Calu3 (cell line): ENCODE measurements at regions of chr5 and their contacts with region 1.

Region 1: DNA sequence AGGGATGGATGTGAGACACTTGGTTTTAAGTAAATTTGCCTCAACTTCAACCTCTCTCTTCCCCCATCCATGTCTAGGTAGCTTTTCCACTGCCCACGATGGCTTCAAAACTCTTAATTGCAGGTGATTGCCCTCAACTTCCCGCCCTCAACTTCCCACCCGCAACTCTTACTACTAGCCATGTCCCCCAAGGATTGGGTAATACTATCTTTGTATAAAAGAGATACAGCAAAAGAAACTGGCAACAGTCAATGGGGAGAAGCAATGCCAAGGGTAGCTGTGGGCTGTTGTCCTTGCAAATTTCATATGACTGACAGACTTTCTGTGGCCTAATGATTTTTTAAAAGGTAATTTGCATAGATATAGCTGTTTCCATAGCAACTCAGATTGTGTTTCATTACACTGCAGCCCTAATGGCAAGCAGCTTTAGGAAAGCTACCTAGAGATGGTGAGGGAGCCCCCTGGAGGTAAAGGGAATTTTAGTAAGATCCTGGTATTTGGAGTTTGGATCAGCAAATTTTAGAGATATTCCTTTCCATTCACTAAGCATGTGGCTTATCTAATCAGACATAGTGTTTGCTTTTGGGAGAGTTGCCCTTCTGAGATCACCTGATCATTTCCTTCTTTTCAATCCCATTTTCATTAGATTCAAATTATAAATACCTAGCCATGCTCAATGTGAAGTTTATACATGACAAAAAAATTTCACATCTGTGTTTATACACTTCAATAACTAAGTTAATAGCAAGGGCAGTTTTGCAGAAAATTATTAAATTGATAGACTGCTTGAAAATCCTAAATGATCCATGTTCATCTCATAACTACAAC is 421.6 kb upstream of the DAP start:
- DNase-seq: peak; percentile 56
- H3K4me3 Mint-ChIP-seq: no peak overlapping the region
- H3K27ac Mint-ChIP-seq: no peak overlapping the region
- H3K4me1 Mint-ChIP-seq: no peaks in the 10 kb centered on the region
- H3K27me3 Mint-ChIP-seq: no peaks in the 10 kb centered on the region
- CTCF ChIP-seq: peak; percentile 32

Region 2: GRCh38 chr5:10536931-10537579 is 645.6 kb before region 1 on chr5:
- CTCF ChIA-PET with region 1: no interaction called
- intact Hi-C with region 1: no loop called
- DNase-seq: no peak
- H3K4me3 Mint-ChIP-seq: peak overlapping the region; percentile 42
- H3K27ac Mint-ChIP-seq: no peak overlapping the region
- H3K4me1 Mint-ChIP-seq: peaks cover 11% of the 10 kb centered on the region
- H3K27me3 Mint-ChIP-seq: peaks cover 35% of the 10 kb centered on the region
- CTCF ChIP-seq: no peak

Region 3: DNA sequence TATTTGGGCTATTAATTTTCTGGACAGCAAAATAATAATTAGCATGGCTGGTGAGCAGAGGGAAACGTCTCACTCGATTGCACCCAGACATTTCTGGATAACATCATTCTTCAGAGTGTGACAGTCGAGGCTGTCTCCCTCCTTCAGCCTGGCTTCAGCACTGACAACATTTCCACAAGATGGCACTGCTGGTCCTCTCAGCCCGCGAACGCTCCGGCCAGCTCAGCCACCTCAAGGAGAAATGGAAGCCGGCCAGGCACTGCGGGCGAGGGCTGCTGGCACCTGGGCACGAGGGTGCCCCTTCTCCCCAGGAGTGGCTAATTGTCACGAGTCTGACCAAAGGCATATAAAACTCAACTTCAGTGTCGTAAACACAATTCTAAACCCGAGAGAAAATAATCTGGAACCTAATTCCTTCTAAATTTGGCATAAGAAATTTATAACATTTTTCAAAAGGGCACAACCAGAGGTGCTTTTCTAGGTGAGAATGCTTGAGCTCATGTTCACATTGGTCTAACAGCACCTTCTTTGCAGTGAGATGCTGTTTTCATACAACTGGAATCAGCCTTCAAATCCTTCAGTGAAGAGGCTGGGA is 487.5 kb before region 1 on chr5:
- CTCF ChIA-PET with region 1: no interaction called
- intact Hi-C with region 1: loop called (anchors 10 kb)
- DNase-seq: peak; percentile 78
- H3K4me3 Mint-ChIP-seq: no peak overlapping the region
- H3K27ac Mint-ChIP-seq: no peak overlapping the region
- H3K4me1 Mint-ChIP-seq: peaks cover 34% of the 10 kb centered on the region
- H3K27me3 Mint-ChIP-seq: no peaks in the 10 kb centered on the region
- CTCF ChIP-seq: peak; percentile 52

Region 4: DNA sequence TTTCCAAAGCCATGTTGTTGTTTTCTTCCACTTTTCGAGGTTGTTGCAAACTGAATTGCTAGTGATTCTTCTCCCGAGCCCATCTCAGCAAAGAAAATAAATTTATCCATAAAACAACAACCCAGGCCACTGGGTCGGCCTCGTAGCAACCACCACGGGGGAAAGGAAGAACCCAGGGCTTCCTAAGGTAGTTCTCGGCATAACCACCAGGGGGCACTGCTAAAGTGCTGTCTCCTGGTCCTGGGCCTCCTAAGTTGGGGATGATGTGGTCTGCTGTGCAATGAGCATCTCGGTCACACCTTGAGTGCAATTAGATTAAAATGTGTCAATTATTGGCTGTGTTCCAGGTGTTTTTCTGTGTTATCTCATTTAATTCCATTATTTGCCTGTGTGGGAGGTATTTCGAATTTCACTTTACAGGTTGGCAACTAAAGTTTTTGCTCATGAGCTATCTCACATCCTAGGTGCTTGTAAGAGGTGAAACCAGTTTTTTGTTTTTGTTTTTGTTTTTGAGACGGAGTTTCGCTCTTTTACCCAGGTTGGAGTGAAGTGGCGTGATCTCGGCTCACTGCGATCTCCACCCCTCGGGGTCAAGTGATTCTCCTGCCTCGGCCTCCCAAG is 318.8 kb before region 1 on chr5:
- CTCF ChIA-PET with region 1: no interaction called
- intact Hi-C with region 1: loop called (anchors 2 kb)
- DNase-seq: peak; percentile 76
- H3K4me3 Mint-ChIP-seq: no peak overlapping the region
- H3K27ac Mint-ChIP-seq: no peak overlapping the region
- H3K4me1 Mint-ChIP-seq: no peaks in the 10 kb centered on the region
- H3K27me3 Mint-ChIP-seq: peaks cover 72% of the 10 kb centered on the region
- CTCF ChIP-seq: peak; percentile 85

Region 5: GRCh38 chr5:10987930-10988504 is 194.6 kb before region 1 on chr5:
- CTCF ChIA-PET with region 1: interaction called, 9 read pairs
- intact Hi-C with region 1: loop called (anchors 1 kb)
- DNase-seq: peak; percentile 93
- H3K4me3 Mint-ChIP-seq: peak overlapping the region; percentile 32
- H3K27ac Mint-ChIP-seq: no peak overlapping the region
- H3K4me1 Mint-ChIP-seq: peaks cover 13% of the 10 kb centered on the region
- H3K27me3 Mint-ChIP-seq: no peaks in the 10 kb centered on the region
- CTCF ChIP-seq: peak; percentile 79

Region 6: GRCh38 chr5:11046160-11046559 is 136.5 kb before region 1 on chr5:
- CTCF ChIA-PET with region 1: no interaction called
- intact Hi-C with region 1: loop called (anchors 1 kb)
- DNase-seq: no peak
- H3K4me3 Mint-ChIP-seq: no peak overlapping the region
- H3K27ac Mint-ChIP-seq: no peak overlapping the region
- H3K4me1 Mint-ChIP-seq: peaks cover 5% of the 10 kb centered on the region
- H3K27me3 Mint-ChIP-seq: no peaks in the 10 kb centered on the region
- CTCF ChIP-seq: no peak

Region 7: GRCh38 chr5:11075035-11075805 is 107.4 kb before region 1 on chr5:
- CTCF ChIA-PET with region 1: no interaction called
- intact Hi-C with region 1: no loop called
- DNase-seq: no peak
- H3K4me3 Mint-ChIP-seq: no peak overlapping the region
- H3K27ac Mint-ChIP-seq: peak overlapping the region; percentile 5
- H3K4me1 Mint-ChIP-seq: peaks cover 25% of the 10 kb centered on the region
- H3K27me3 Mint-ChIP-seq: no peaks in the 10 kb centered on the region
- CTCF ChIP-seq: no peak

Region 8: DNA sequence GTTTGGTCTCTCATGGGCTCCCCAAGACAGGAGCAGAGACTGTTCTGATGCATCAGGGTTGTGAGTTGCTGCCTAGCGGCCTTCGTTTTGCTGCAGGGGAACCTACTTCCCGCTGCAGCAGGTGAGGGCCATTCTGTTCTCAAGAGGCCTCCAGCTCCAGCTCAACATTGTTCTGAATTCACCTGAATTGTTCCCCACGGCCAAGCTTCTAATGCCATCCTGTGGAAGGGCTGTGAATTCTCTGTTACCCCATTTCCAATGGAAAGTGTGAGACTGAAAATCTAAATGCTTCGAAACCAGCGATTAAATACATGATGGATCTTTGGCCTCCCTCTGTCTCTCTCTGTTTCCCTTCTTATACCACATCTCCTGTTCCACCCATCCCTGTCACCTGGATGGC is 72.5 kb before region 1 on chr5:
- CTCF ChIA-PET with region 1: no interaction called
- intact Hi-C with region 1: no loop called
- DNase-seq: no peak
- H3K4me3 Mint-ChIP-seq: no peak overlapping the region
- H3K27ac Mint-ChIP-seq: no peak overlapping the region
- H3K4me1 Mint-ChIP-seq: no peaks in the 10 kb centered on the region
- H3K27me3 Mint-ChIP-seq: no peaks in the 10 kb centered on the region
- CTCF ChIP-seq: no peak